Activated T-helper 1 cell treated with anti-CD3 and anti-CD28 coated beads, Interleukin-12 subunit alpha, Interleukin-12 subunit beta, Interleukin-2, Interleukin-4 antibody, amounts not matched to agents 30 ng/mL and 10 ng/mL and 1 ng/mL, durations not matched to agents 14 hours and 24 hours and 36 hours (primary cell): ENCODE measurements at regions of chr17 and their contacts with region 1.

Region 1: DNA sequence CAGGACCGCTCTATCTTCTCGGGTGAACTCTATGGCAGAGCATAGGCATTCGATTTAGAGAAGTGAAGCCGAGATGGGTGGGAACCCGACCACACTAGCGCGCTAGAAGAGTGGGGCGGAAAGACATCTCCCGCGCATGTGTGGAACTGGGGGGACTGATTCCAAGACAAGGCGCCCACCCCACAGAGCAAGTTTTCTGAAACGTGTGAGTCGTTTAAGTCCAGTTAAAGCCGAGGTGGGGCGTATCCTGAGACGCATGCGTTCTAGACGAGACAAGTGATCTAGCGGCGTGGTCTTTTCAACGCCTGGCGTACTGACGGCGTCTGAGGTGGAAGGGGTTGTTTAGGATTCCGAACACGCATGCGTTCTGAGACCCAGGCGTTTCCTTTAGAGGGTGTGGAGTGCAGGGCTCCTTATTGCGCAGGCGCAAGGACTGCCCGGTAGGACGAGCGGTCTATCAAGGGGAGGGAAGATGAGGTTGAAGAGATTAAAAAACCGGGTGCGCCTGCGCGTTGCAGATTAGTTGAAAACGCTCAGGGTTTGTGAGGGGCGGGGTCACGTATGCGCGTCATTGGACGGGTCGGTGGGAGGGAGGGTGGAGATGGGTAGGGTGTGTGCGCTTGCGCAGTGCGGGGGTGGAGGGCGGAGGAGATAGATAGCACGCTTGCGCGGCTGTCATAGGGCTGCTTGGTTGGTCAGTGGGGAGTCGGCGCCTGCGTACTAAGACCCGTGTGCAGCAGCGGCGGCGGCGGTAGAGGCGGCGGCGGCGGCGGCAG is at the start of gene EIF5A:
- DNase-seq: peak; percentile 99
- H3K4me3 Mint-ChIP-seq: peak within 1 kb of the TSS; percentile 94
- H3K27ac Mint-ChIP-seq: peak within 1 kb of the TSS; percentile 100
- H3K4me1 Mint-ChIP-seq: peaks cover 24% of the 10 kb centered on the region
- H3K27me3 Mint-ChIP-seq: peaks cover 4% of the 10 kb centered on the region
- total RNA-seq, gene EIF5A: 1,241 and 1,262 TPM in 2 replicates

Region 2: DNA sequence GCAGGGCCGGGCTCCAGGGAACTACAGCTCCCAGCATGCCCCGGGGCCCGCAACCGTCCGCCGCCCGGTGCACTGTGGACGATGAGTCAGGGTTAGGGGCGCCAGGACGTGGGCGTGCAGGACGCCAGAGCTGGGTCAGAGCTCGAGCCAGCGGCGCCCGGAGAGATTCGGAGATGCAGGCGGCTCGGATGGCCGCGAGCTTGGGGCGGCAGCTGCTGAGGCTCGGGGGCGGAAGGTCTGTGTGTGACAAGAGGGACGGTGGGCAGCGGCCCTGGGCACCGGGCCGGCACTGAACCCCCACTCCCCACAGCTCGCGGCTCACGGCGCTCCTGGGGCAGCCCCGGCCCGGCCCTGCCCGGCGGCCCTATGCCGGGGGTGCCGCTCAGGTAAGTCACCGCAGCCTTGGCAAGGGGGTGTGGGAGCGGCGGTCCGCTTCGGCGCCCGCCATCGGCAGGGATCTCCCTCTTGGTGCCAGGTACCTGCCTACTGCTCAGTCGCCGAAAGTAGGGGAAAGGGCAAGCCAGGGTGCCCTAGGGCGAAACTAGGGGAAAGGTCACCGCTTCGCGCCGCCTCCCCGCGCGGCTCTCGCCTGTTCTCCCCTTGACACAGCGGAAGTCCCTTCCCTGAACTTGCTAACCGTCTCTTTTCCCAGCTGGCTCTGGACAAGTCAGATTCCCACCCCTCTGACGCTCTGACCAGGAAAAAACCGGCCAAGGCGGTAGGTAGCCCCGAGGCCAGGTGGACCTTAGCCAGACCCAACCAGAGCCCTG is 87.1 kb before region 1 on chr17 and contains the starts of genes ACADVL and DLG4:
- intact Hi-C with region 1: loop called (anchors 1 kb)
- DNase-seq: peak; percentile 74
- H3K4me3 Mint-ChIP-seq: peak within 1 kb of the TSS; percentile 96
- H3K27ac Mint-ChIP-seq: peak within 1 kb of the TSS; percentile 96
- H3K4me1 Mint-ChIP-seq: peaks cover 54% of the 10 kb centered on the region
- H3K27me3 Mint-ChIP-seq: peaks cover 2% of the 10 kb centered on the region
- total RNA-seq, gene ACADVL: 287 and 294 TPM in 2 replicates
- total RNA-seq, gene DLG4: 15.3 and 15.5 TPM in 2 replicates

Region 3: GRCh38 chr17:7233701-7234082 is 73.4 kb before region 1 on chr17:
- intact Hi-C with region 1: no loop called
- DNase-seq: no peak
- H3K4me3 Mint-ChIP-seq: peak overlapping the region; percentile 91
- H3K27ac Mint-ChIP-seq: peak overlapping the region; percentile 79
- H3K4me1 Mint-ChIP-seq: peaks cover 46% of the 10 kb centered on the region
- H3K27me3 Mint-ChIP-seq: no peaks in the 10 kb centered on the region

Region 4: GRCh38 chr17:7280519-7281429 is 26.3 kb before region 1 on chr17:
- intact Hi-C with region 1: loop called (anchors 1 kb)
- DNase-seq: peak; percentile 69
- H3K4me3 Mint-ChIP-seq: peak overlapping the region; percentile 79
- H3K27ac Mint-ChIP-seq: peak overlapping the region; percentile 40
- H3K4me1 Mint-ChIP-seq: peaks cover 16% of the 10 kb centered on the region
- H3K27me3 Mint-ChIP-seq: peaks cover 33% of the 10 kb centered on the region

Region 5: DNA sequence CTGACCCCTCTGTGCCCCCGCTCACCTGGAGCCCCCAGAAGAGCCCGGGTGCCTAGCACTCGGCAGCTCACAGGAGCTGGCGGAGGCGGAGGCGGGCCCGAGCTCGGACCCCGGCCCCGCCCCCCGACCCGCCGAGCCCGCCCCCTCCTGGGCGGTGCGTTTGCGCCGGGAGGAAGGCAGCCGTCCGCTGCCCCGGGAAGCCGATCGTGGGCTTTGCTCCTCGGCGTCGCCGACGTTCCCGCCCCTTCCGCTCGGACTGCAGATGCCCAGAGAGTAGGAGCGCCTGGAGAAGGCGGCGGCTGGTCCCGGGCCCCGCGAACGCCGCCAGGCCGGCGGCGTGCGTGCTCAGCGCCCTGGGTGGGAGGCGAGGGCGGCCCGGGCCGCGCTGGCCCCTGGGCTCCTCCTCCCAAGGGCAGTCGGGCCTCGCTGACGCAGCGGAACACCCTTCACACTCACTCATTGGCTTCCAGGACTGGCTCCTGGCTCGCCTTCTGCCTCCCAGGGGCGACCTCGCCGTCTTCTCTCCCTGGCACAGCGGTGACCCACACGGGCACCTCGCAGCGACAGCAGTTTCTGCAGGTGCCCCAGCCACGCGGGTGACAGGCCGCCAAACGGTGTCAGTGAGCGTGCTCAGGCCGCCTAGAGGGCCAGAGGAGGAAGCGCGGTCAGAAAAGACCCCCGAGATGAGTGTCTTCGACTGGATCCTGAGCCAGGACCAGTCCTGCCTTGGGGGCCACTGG is 87.5 kb after region 1 on chr17 and contains the start of gene PLSCR3:
- intact Hi-C with region 1: loop called (anchors 2 kb)
- DNase-seq: peak; percentile 82
- H3K4me3 Mint-ChIP-seq: peak within 1 kb of the TSS; percentile 97
- H3K27ac Mint-ChIP-seq: peak within 1 kb of the TSS; percentile 96
- H3K4me1 Mint-ChIP-seq: peaks cover 22% of the 10 kb centered on the region
- H3K27me3 Mint-ChIP-seq: peaks cover 2% of the 10 kb centered on the region
- total RNA-seq, gene PLSCR3: 77.1 and 78.2 TPM in 2 replicates

Region 6: GRCh38 chr17:7484067-7484918 is 177.2 kb after region 1 on chr17 and contains the start of gene POLR2A:
- intact Hi-C with region 1: loop called (anchors 1 kb)
- DNase-seq: peak; percentile 96
- H3K4me3 Mint-ChIP-seq: peak within 1 kb of the TSS; percentile 96
- H3K27ac Mint-ChIP-seq: peak within 1 kb of the TSS; percentile 98
- H3K4me1 Mint-ChIP-seq: peaks cover 56% of the 10 kb centered on the region
- H3K27me3 Mint-ChIP-seq: no peaks in the 10 kb centered on the region
- total RNA-seq, gene POLR2A: 221 and 223 TPM in 2 replicates

Region 7: DNA sequence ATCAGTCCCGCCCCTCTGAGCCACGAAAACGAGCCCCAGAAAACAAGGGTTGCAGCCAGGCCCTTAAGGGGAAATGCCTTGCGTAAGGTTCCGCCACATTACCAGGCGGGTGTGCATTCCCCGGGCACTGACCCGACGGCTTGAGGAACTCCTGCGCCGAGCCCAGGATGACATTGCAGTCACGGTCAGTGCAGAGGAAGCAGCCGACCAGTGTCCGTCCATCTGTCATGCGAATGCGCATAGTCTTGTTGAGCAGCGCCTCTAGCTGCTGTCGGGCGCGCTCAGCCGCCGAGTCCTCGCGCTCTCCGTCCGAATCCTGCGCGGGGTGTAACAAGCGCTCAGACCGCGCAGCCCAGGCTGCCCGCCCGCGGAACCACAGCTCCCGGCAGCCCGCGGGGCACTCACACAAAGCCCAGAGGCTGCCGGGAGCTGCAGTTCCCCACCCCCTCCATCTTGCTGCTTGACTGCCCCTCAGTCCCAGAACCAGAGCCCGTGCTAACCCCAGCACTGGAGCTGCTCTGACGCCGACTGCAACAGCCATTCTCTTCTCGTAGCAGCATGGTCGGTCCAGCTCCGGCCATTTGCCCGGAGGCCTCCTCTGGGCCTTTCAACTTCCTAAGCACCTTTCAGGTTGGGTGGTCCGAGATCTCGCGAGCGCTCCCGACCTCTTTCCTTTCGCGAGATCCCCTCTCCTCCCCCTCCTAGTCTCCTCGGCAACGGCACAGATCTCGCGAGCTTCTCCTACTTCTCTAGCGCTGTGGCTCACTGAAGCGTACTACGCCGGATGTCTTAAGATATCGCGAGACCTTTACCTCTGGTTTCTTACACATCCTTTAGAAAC is 550.0 kb after region 1 on chr17 and contains the start of gene NAA38:
- intact Hi-C with region 1: loop called (anchors 5 kb)
- DNase-seq: peak; percentile 92
- H3K4me3 Mint-ChIP-seq: no peak within 1 kb of the TSS
- H3K27ac Mint-ChIP-seq: no peak within 1 kb of the TSS
- H3K4me1 Mint-ChIP-seq: no peaks in the 10 kb centered on the region
- H3K27me3 Mint-ChIP-seq: no peaks in the 10 kb centered on the region
- total RNA-seq, gene NAA38: 36.4 and 43.5 TPM in 2 replicates